Posterior cingulate gyrus (tissue), 11 donors: ENCODE measurements at regions of chr15 and their contacts with region 1.

Region 1: DNA sequence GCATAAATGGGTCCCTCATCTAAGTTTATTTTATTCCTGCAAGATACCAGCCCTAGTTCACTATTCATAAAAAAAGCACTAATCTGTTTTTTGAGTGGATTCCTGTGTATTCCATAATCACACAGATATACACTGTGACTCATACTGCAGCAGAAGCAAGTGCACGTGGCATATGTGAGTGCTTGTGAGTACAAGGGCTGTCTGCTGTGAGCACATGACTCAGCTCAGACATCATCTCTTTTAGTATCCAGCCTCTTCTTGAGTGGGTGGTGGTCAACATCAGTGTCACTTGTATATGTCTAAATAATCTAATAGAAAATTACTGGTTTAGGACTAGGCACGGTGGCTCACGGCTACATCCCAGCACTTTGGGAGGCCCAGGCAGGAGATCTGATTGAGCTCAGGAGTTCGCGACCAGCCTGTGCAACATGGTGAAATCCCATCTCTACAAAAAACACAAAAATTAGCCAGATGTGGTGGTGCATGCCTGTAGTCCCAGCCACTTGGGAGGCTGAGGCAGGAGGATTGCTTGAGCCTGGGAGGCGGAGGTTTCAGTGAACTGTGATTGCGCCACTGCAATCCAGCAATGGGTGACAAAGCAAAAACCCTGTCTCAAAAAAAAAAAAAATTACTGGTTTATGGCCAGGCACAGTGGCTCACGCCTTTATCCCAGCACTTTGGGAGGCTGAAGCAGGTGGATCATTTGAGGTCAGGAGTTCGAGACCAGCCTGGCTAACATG is 49.8 kb downstream of the NIPA2 start:
- DNase-seq: peak in 6 of 10 donors; percentile 22 to 79 (median 44)

Region 2: DNA sequence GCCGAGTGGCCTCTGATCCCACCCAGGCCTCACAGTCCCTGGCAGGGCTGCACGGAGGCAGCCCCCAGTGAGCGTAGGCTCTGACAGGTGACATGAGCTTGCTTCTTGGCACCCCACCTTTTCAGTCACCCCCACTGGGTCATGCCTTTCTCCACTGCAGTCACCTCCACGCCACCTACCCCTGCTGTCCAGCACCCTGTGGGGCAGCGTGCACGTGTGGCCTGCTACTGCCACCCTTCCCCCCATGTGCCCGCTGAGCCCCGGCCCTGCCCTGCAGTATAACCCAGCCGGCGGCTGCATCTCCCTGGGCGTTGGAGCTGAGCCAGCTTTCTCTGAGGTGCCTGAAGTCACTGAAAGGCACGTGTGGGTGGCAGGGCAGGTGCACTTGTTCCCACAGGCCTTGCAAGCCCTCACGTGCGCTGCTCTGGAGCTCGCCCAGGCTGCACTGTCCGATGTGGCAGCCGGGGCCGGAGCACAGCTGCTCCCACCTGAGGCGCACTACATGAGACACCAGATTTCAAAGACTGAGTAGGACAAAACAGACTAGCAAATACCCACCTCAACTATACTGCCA is 15.8 kb after region 1 on chr15:
- intact Hi-C with region 1: loop called (anchors 2 kb)
- DNase-seq: peak in 1 of 10 donors; percentile 79